Activated CD8-positive, alpha-beta T cell treated with anti-CD3 and anti-CD28 coated beads, Interleukin-2, amount 10 ng/mL, durations not matched to agents 7 days and 5 days (primary cell): ENCODE measurements at regions of chr17 and their contacts with region 1.

Region 1: GRCh38 chr17:56779898-56780733 is 53.6 kb downstream of the C17orf67 start:
- DNase-seq: peak; percentile 89
- ATAC-seq: peak; percentile 97
- H3K4me3 Mint-ChIP-seq: peak overlapping the region; percentile 82
- H3K27ac Mint-ChIP-seq: peak overlapping the region; percentile 83
- H3K4me1 Mint-ChIP-seq: peaks cover 19% of the 10 kb centered on the region
- H3K27me3 Mint-ChIP-seq: peaks cover 19% of the 10 kb centered on the region

Region 2: DNA sequence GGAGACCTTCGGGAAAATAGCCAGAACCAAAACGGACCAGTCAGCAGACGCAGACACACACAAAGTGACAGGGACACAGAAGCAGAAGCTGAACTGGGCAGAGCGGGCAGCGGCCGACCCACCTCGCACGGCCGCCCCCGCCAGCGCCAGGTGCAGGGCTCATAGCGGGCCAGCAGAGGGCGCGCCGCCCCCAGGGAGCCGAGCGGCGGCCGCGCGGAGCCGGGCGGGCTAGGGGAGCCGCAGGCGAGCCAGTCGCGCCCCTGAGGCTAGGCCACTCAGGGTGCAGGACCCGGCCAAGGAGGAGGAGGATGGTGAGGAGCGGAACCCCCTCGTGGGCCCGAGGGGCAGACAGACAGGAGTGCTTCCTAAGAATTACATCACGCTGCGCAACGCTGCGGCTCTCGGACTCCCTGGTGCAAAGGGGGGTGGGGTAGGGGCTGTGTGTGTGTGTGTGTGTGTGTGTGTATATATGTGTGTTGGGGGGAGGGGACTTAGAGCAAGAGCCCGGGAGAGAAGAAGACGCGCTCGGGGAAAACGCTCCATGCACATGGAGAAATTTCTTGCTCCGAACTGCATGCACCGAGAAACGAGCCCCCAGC is 187.5 kb before region 1 on chr17:
- CTCF ChIA-PET with region 1: interaction called, 22 read pairs
- POLR2A ChIA-PET with region 1: interaction called, 5 read pairs
- DNase-seq: peak; percentile 66
- ATAC-seq: peak; percentile 70
- H3K4me3 Mint-ChIP-seq: peak overlapping the region; percentile 36
- H3K27ac Mint-ChIP-seq: no peak overlapping the region
- H3K4me1 Mint-ChIP-seq: peaks cover 27% of the 10 kb centered on the region
- H3K27me3 Mint-ChIP-seq: peaks cover 50% of the 10 kb centered on the region

Region 3: GRCh38 chr17:56602292-56603130 is 177.6 kb before region 1 on chr17:
- CTCF ChIA-PET with region 1: interaction called, 15 read pairs
- POLR2A ChIA-PET with region 1: no interaction called
- DNase-seq: no peak
- ATAC-seq: no peak
- H3K4me3 Mint-ChIP-seq: no peak overlapping the region
- H3K27ac Mint-ChIP-seq: no peak overlapping the region
- H3K4me1 Mint-ChIP-seq: peaks cover 26% of the 10 kb centered on the region
- H3K27me3 Mint-ChIP-seq: peaks cover 19% of the 10 kb centered on the region

Region 4: GRCh38 chr17:56653877-56654276 is 126.2 kb before region 1 on chr17:
- CTCF ChIA-PET with region 1: interaction called, 13 read pairs
- POLR2A ChIA-PET with region 1: no interaction called
- DNase-seq: peak; percentile 60
- ATAC-seq: peak; percentile 89
- H3K4me3 Mint-ChIP-seq: no peak overlapping the region
- H3K27ac Mint-ChIP-seq: no peak overlapping the region
- H3K4me1 Mint-ChIP-seq: peaks cover 2% of the 10 kb centered on the region
- H3K27me3 Mint-ChIP-seq: peaks cover 17% of the 10 kb centered on the region

Region 5: DNA sequence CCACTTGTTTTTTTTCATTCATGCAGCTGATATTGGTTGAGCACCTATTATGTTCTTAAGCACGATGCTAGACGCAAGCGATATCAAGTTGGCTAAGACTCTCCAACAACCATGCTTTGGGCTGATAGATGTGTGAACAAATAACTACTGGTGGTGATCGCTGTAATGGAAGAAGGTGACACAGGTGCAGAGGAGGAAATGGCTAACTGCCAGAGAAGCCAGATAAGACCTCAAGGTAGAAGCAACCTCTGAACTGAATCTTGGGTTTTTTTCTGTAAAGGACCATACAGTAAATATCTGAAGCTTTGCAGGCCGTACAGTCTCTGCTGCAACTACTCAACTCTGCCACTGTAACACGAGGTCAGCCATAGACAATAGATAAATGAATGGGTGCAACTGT is 44.3 kb before region 1 on chr17:
- CTCF ChIA-PET with region 1: interaction called, 10 read pairs
- POLR2A ChIA-PET with region 1: no interaction called
- DNase-seq: no peak
- ATAC-seq: no peak
- H3K4me3 Mint-ChIP-seq: no peak overlapping the region
- H3K27ac Mint-ChIP-seq: no peak overlapping the region
- H3K4me1 Mint-ChIP-seq: no peaks in the 10 kb centered on the region
- H3K27me3 Mint-ChIP-seq: peaks cover 3% of the 10 kb centered on the region

Region 6: GRCh38 chr17:56754523-56755208 is 25.4 kb before region 1 on chr17:
- CTCF ChIA-PET with region 1: interaction called, 14 read pairs
- POLR2A ChIA-PET with region 1: interaction called, 3 read pairs
- DNase-seq: peak; percentile 33
- ATAC-seq: peak; percentile 42
- H3K4me3 Mint-ChIP-seq: no peak overlapping the region
- H3K27ac Mint-ChIP-seq: peak overlapping the region; percentile 15
- H3K4me1 Mint-ChIP-seq: peaks cover 14% of the 10 kb centered on the region
- H3K27me3 Mint-ChIP-seq: no peaks in the 10 kb centered on the region

Region 7: GRCh38 chr17:56762988-56763387 is 17.1 kb before region 1 on chr17:
- CTCF ChIA-PET with region 1: interaction called, 25 read pairs
- POLR2A ChIA-PET with region 1: interaction called, 3 read pairs
- DNase-seq: no peak
- ATAC-seq: peak; percentile 70
- H3K4me3 Mint-ChIP-seq: no peak overlapping the region
- H3K27ac Mint-ChIP-seq: peak overlapping the region; percentile 56
- H3K4me1 Mint-ChIP-seq: peaks cover 12% of the 10 kb centered on the region
- H3K27me3 Mint-ChIP-seq: no peaks in the 10 kb centered on the region